Activated B cell treated with CpG ODN at 0.5 μM for 24 hours (primary cell): ENCODE measurements at regions of chr15 and their contacts with region 1.

Region 1: GRCh38 chr15:38563723-38564519 is 693 bp downstream of the RASGRP1 start:
- DNase-seq: peak; percentile 87
- ATAC-seq: peak; percentile 78
- H3K4me3 Mint-ChIP-seq: peak overlapping the region; percentile 90
- H3K27ac Mint-ChIP-seq: peak overlapping the region; percentile 88
- H3K4me1 Mint-ChIP-seq: peaks cover 50% of the 10 kb centered on the region
- H3K27me3 Mint-ChIP-seq: no peaks in the 10 kb centered on the region
- CTCF ChIP-seq: no peak

Region 2: DNA sequence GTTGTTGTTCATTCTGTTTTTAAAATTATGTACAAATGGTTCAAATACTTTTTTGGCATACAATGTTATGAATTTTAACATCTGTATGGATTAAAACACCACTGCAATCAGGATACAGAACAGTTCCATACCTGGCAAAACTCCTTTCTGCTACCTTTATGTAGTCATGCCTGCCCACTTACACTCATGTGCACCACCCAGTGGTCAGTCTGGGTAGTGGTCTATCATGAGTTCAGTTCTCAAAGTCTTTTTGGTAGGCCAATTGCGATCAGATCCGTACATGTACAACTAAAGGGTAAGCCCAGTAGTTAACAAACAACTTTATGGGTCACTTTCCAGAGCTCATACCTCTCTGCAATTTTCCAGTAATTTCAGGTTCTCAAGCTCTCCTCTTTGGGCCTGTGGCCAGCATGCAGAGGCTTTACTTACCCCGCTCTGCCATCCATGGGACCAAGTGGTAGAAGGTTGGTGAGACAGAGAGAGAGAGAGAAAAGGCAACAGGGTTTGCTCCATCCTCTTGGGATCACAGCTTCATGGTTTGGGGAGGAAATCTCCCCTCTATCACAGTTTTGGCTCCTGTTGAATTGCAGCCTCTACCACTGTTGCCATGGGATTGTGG is 173.9 kb before region 1 on chr15:
- CTCF ChIA-PET with region 1: no interaction called
- POLR2A ChIA-PET with region 1: no interaction called
- intact Hi-C with region 1: no loop called
- DNase-seq: peak; percentile 20
- ATAC-seq: peak; percentile 67
- H3K4me3 Mint-ChIP-seq: no peak overlapping the region
- H3K27ac Mint-ChIP-seq: no peak overlapping the region
- H3K4me1 Mint-ChIP-seq: no peaks in the 10 kb centered on the region
- H3K27me3 Mint-ChIP-seq: peaks cover 13% of the 10 kb centered on the region
- CTCF ChIP-seq: peak; percentile 38

Region 3: GRCh38 chr15:38453971-38454695 is 109.8 kb before region 1 on chr15 and contains the start of gene FAM98B:
- CTCF ChIA-PET with region 1: interaction called, 11 read pairs
- POLR2A ChIA-PET with region 1: interaction called, 9 read pairs
- intact Hi-C with region 1: loop called (anchors 1 kb)
- DNase-seq: peak; percentile 92
- ATAC-seq: peak; percentile 90
- H3K4me3 Mint-ChIP-seq: peak within 1 kb of the TSS; percentile 97
- H3K27ac Mint-ChIP-seq: peak within 1 kb of the TSS; percentile 91
- H3K4me1 Mint-ChIP-seq: peaks cover 35% of the 10 kb centered on the region
- H3K27me3 Mint-ChIP-seq: peaks cover 2% of the 10 kb centered on the region
- CTCF ChIP-seq: no peak
- total RNA-seq, gene FAM98B: 29.9 and 30.7 TPM in 2 replicates

Region 4: GRCh38 chr15:38551720-38552648 is 11.9 kb before region 1 on chr15:
- CTCF ChIA-PET with region 1: interaction called, 20 read pairs
- POLR2A ChIA-PET with region 1: interaction called, 7 read pairs
- intact Hi-C with region 1: no loop called
- DNase-seq: no peak
- ATAC-seq: no peak
- H3K4me3 Mint-ChIP-seq: no peak overlapping the region
- H3K27ac Mint-ChIP-seq: no peak overlapping the region
- H3K4me1 Mint-ChIP-seq: peaks cover 48% of the 10 kb centered on the region
- H3K27me3 Mint-ChIP-seq: no peaks in the 10 kb centered on the region
- CTCF ChIP-seq: no peak

Region 5: GRCh38 chr15:38647683-38648082 is 83.8 kb after region 1 on chr15:
- CTCF ChIA-PET with region 1: interaction called, 18 read pairs
- POLR2A ChIA-PET with region 1: interaction called, 41 read pairs
- intact Hi-C with region 1: loop called (anchors 1 kb)
- DNase-seq: no peak
- ATAC-seq: no peak
- H3K4me3 Mint-ChIP-seq: no peak overlapping the region
- H3K27ac Mint-ChIP-seq: no peak overlapping the region
- H3K4me1 Mint-ChIP-seq: peaks cover 60% of the 10 kb centered on the region
- H3K27me3 Mint-ChIP-seq: no peaks in the 10 kb centered on the region
- CTCF ChIP-seq: no peak

Region 6: DNA sequence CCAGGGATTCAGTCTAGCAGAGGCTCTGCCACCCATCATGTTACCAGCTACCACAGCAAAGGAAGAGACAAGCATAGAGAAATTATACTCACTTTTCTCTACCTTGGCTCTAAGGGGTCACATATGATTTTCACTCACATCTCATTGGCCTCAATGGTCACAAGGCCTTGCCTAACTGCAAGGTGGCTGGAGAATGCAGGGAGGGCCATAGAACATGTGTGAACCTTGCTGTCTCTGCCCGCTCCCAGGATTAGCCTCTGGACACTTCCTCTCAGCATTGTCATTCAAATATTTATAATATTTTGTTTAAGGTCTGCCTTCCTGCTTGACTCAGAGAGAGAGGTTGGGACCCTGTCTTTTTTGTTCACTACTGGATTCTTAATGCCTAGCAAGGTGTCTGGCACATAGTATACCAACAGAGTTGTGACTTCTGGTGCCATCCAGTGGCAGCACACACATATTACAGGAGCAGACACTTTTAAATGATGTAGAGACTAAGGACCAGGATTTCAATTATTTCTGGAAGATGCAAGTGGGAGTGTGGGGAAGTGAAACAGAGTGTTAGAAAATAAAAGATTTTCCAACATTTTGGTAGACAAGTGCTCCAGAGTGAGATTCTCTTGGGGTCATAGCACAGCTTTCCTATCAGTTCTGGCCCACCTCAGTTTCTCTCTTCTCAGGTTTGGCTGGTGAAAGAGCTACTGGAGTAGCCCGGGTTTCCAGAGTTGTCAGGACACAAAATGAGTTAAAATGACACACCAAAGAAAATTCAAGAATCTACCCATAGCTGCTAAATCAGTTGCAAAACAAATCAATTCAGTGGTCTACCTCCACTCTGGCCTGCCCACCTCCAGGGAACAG is 119.7 kb after region 1 on chr15:
- CTCF ChIA-PET with region 1: interaction called, 218 read pairs
- POLR2A ChIA-PET with region 1: interaction called, 135 read pairs
- intact Hi-C with region 1: loop called (anchors 1 kb)
- DNase-seq: peak; percentile 47
- ATAC-seq: peak; percentile 74
- H3K4me3 Mint-ChIP-seq: peak overlapping the region; percentile 32
- H3K27ac Mint-ChIP-seq: peak overlapping the region; percentile 86
- H3K4me1 Mint-ChIP-seq: peaks cover 33% of the 10 kb centered on the region
- H3K27me3 Mint-ChIP-seq: no peaks in the 10 kb centered on the region
- CTCF ChIP-seq: peak; percentile 56